ENCODE measurements at regions of chr6 and their contacts with region 1.

Region 1: GRCh38 chr6:16761471-16762267 is 409 bp upstream of the ATXN1 start:
- DNase-seq: peak; percentile 83
- H3K4me3 Mint-ChIP-seq: peak overlapping the region; percentile 99
- H3K27ac Mint-ChIP-seq: peak overlapping the region; percentile 99
- H3K4me1 Mint-ChIP-seq: peaks cover 62% of the 10 kb centered on the region
- H3K27me3 Mint-ChIP-seq: no peaks in the 10 kb centered on the region

Region 2: GRCh38 chr6:15987569-15987968 is 774.1 kb before region 1 on chr6:
- intact Hi-C with region 1: no loop called
- DNase-seq: no peak
- H3K4me3 Mint-ChIP-seq: no peak overlapping the region
- H3K27ac Mint-ChIP-seq: no peak overlapping the region
- H3K4me1 Mint-ChIP-seq: peaks cover 42% of the 10 kb centered on the region
- H3K27me3 Mint-ChIP-seq: no peaks in the 10 kb centered on the region

Region 3: GRCh38 chr6:16471222-16471909 is 290.3 kb before region 1 on chr6:
- intact Hi-C with region 1: loop called (anchors 2 kb)
- DNase-seq: no peak
- H3K4me3 Mint-ChIP-seq: peak overlapping the region; percentile 35
- H3K27ac Mint-ChIP-seq: peak overlapping the region; percentile 87
- H3K4me1 Mint-ChIP-seq: peaks cover 68% of the 10 kb centered on the region
- H3K27me3 Mint-ChIP-seq: no peaks in the 10 kb centered on the region

Region 4: GRCh38 chr6:16591396-16592222 is 170.1 kb before region 1 on chr6:
- intact Hi-C with region 1: loop called (anchors 2 kb)
- DNase-seq: no peak
- H3K4me3 Mint-ChIP-seq: no peak overlapping the region
- H3K27ac Mint-ChIP-seq: peak overlapping the region; percentile 61
- H3K4me1 Mint-ChIP-seq: peaks cover 21% of the 10 kb centered on the region
- H3K27me3 Mint-ChIP-seq: no peaks in the 10 kb centered on the region

Region 5: GRCh38 chr6:16698997-16699868 is 62.4 kb before region 1 on chr6:
- intact Hi-C with region 1: loop called (anchors 2 kb)
- DNase-seq: no peak
- H3K4me3 Mint-ChIP-seq: peak overlapping the region; percentile 80
- H3K27ac Mint-ChIP-seq: peak overlapping the region; percentile 95
- H3K4me1 Mint-ChIP-seq: peaks cover 73% of the 10 kb centered on the region
- H3K27me3 Mint-ChIP-seq: no peaks in the 10 kb centered on the region

Region 6: DNA sequence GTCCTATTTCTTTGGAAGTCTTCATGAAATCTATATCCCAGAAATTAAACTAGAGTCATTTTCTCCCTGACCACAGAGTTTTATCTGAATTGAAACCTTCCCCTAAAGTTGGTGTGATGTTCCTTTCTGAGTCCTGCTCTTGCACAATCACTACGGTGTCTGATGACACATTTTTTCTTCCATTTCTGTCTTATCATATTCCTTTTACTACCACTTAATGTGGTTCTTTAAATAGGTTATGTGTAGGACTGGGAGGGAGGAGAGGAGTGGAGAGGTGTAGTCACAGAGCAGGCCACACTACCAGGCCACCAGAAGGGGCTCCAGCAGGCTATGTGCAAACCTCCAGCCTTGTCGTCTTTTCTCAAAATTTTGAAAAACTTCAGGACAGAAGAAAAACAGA is 39.3 kb after region 1 on chr6:
- intact Hi-C with region 1: loop called (anchors 2 kb)
- DNase-seq: no peak
- H3K4me3 Mint-ChIP-seq: peak overlapping the region; percentile 9
- H3K27ac Mint-ChIP-seq: peak overlapping the region; percentile 56
- H3K4me1 Mint-ChIP-seq: peaks cover 26% of the 10 kb centered on the region
- H3K27me3 Mint-ChIP-seq: peaks cover 8% of the 10 kb centered on the region

Measured in activated T-helper 2 cell treated with anti-CD3 and anti-CD28 coated beads, Interferon-gamma antibody, Interleukin-2, Interleukin-4, amounts not matched to agents 10 μg/mL and 5 μg/mL and 100 μg/mL, durations not matched to agents 14 hours and 24 hours and 36 hours (primary cell).